ENCODE measurements at regions of chr10 and their contacts with region 1.

Region 1: DNA sequence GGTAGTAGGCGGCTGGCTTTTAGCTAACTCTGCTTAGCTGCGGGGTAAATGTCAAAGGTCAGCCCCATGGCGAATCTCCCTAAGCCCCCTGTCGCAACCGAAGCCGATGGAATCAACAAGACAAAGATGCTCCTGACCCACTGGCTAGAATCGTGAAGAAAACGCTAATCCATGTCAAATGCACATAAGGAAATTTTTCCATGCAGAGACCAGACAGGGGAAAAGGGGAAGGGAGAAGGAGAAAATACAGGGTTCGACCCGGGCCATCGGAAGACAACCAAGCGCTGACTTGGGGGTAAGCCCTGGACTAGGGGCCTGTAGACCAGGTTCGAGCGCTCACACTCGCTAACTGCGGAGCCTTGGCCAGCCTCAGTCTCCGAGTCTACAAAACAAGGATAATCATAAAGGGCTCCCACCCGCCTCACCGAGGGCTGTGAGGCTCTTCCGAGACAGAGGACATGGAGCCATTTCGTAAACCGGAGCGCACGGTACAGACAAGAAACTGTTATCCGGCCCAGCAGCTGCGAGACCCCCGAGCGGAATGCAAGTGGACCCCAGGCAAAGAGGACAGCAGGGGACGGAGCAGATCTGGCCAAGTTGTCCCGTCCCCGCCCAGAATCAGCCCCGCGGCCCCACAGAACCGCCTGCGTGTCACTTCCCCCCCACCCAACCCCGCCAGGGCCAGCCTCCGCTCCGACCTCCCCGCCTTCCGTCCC is 507 bp downstream of the SAR1A start:
- DNase-seq: no peak
- H3K4me3 Mint-ChIP-seq: peak overlapping the region; percentile 96
- H3K27ac Mint-ChIP-seq: peak overlapping the region; percentile 83
- H3K4me1 Mint-ChIP-seq: peaks cover 65% of the 10 kb centered on the region
- H3K27me3 Mint-ChIP-seq: no peaks in the 10 kb centered on the region

Region 2: GRCh38 chr10:70093335-70093944 is 76.4 kb before region 1 on chr10:
- intact Hi-C with region 1: loop called (anchors 2 kb)
- DNase-seq: peak; percentile 11
- H3K4me3 Mint-ChIP-seq: peak overlapping the region; percentile 76
- H3K27ac Mint-ChIP-seq: peak overlapping the region; percentile 44
- H3K4me1 Mint-ChIP-seq: peaks cover 31% of the 10 kb centered on the region
- H3K27me3 Mint-ChIP-seq: no peaks in the 10 kb centered on the region

Region 3: GRCh38 chr10:70125918-70126552 is 43.8 kb before region 1 on chr10:
- intact Hi-C with region 1: no loop called
- DNase-seq: no peak
- H3K4me3 Mint-ChIP-seq: no peak overlapping the region
- H3K27ac Mint-ChIP-seq: no peak overlapping the region
- H3K4me1 Mint-ChIP-seq: no peaks in the 10 kb centered on the region
- H3K27me3 Mint-ChIP-seq: no peaks in the 10 kb centered on the region

Region 4: GRCh38 chr10:70155255-70155838 is 14.5 kb before region 1 on chr10:
- intact Hi-C with region 1: no loop called
- DNase-seq: no peak
- H3K4me3 Mint-ChIP-seq: no peak overlapping the region
- H3K27ac Mint-ChIP-seq: no peak overlapping the region
- H3K4me1 Mint-ChIP-seq: peaks cover 14% of the 10 kb centered on the region
- H3K27me3 Mint-ChIP-seq: no peaks in the 10 kb centered on the region

Region 5: GRCh38 chr10:70296406-70296899 is 126.6 kb after region 1 on chr10:
- intact Hi-C with region 1: no loop called
- DNase-seq: no peak
- H3K4me3 Mint-ChIP-seq: no peak overlapping the region
- H3K27ac Mint-ChIP-seq: no peak overlapping the region
- H3K4me1 Mint-ChIP-seq: peaks cover 5% of the 10 kb centered on the region
- H3K27me3 Mint-ChIP-seq: no peaks in the 10 kb centered on the region

Measured in activated T-helper 1 cell treated with anti-CD3 and anti-CD28 coated beads, Interleukin-12 subunit alpha, Interleukin-12 subunit beta, Interleukin-2, Interleukin-4 antibody, amounts not matched to agents 30 ng/mL and 10 ng/mL and 1 ng/mL, durations not matched to agents 14 hours and 24 hours and 36 hours (primary cell).